Common myeloid progenitor, CD34-positive (primary cell): ENCODE measurements at regions of chr4 and their contacts with region 1.

Region 1: DNA sequence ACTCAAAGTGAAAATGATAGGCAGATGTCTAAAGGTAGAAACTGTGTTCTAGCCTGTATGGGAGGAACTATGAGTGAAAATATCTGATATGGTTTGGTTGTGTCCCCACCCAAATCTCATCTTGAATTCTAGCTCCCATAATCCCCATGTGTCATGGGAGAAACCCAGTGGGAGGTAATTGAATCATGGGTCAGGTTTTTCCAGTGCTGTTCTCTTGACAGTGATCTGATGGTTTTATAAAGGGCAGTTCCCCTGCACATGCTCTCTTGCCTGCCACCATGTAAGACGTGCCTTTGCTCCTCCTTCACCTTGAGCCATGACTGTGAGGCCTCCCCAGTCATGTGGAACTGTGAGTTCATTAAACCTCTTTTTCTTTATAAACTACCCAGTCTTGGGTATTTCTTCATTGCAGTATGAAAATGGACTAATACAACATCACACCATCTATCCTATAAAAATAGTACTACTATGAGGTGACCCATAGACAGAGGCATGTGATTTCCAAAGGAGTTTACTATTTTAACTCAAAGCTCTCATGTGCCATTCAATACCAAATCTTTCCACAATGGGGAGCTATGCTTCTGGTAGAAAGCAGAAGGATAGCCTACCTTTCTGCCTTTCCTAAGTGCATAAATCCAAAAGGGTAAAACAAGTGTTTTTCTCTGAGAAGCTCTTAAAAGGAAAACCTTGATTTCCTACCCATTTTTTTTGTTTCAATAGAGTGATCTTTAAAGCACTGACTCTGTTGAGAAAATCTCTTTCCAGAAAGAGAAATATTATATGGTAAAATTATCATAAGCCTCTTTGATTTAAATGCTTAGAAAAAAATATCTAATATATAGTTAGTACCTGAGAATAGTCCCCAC is 38.8 kb downstream of the SEC31A start:
- DNase-seq: peak; percentile 48 to 74 (median 68)
- H3K4me3 ChIP-seq: no peak overlapping the region
- H3K27ac ChIP-seq: no peak overlapping the region
- H3K4me1 ChIP-seq: no peaks in the 10 kb centered on the region
- H3K27me3 ChIP-seq: no peaks in the 10 kb centered on the region

Region 2: DNA sequence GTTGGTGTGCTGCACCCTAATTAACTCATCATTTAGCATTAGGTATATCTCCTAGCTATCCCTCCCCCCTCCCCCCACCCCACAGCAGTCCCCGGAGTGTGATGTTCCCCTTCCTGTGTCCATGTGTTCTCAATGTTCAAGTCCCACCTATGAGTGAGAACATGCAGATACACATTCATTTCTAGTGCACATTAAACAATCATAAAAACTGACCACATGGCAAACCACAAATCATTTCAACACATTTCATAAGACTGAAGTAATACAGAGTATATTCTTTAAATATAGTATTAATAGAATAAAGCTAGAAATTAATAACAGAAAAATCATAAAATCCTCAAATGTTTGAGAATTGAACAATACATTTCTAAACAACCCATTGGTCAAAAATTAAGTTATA is 1671.2 kb before region 1 on chr4:
- CTCF ChIA-PET with region 1: no interaction called
- POLR2A ChIA-PET with region 1: no interaction called
- DNase-seq: peak in 2 of 3 donors; percentile 52 to 68
- H3K4me3 ChIP-seq: no peak overlapping the region
- H3K27ac ChIP-seq: no peak overlapping the region
- H3K4me1 ChIP-seq: no peaks in the 10 kb centered on the region
- H3K27me3 ChIP-seq: no peaks in the 10 kb centered on the region

Region 3: GRCh38 chr4:82578935-82579334 is 273.2 kb before region 1 on chr4:
- CTCF ChIA-PET with region 1: no interaction called
- POLR2A ChIA-PET with region 1: no interaction called
- DNase-seq: peak in 1 of 3 donors; percentile 4
- H3K4me3 ChIP-seq: no peak overlapping the region
- H3K27ac ChIP-seq: no peak overlapping the region
- H3K4me1 ChIP-seq: no peaks in the 10 kb centered on the region
- H3K27me3 ChIP-seq: no peaks in the 10 kb centered on the region

Region 4: GRCh38 chr4:82825425-82825824 is 26.7 kb before region 1 on chr4:
- CTCF ChIA-PET with region 1: interaction called, 10 read pairs
- POLR2A ChIA-PET with region 1: no interaction called
- DNase-seq: no peak
- H3K4me3 ChIP-seq: no peak overlapping the region
- H3K27ac ChIP-seq: no peak overlapping the region
- H3K4me1 ChIP-seq: no peaks in the 10 kb centered on the region
- H3K27me3 ChIP-seq: no peaks in the 10 kb centered on the region

Region 5: GRCh38 chr4:82868572-82868971 is 16.5 kb after region 1 on chr4:
- CTCF ChIA-PET with region 1: interaction called, 11 read pairs
- POLR2A ChIA-PET with region 1: no interaction called
- DNase-seq: no peak
- H3K4me3 ChIP-seq: no peak overlapping the region
- H3K27ac ChIP-seq: no peak overlapping the region
- H3K4me1 ChIP-seq: peaks cover 0 to 7% (median 5%) of the 10 kb centered on the region in 4 experiments
- H3K27me3 ChIP-seq: no peaks in the 10 kb centered on the region

Region 6: DNA sequence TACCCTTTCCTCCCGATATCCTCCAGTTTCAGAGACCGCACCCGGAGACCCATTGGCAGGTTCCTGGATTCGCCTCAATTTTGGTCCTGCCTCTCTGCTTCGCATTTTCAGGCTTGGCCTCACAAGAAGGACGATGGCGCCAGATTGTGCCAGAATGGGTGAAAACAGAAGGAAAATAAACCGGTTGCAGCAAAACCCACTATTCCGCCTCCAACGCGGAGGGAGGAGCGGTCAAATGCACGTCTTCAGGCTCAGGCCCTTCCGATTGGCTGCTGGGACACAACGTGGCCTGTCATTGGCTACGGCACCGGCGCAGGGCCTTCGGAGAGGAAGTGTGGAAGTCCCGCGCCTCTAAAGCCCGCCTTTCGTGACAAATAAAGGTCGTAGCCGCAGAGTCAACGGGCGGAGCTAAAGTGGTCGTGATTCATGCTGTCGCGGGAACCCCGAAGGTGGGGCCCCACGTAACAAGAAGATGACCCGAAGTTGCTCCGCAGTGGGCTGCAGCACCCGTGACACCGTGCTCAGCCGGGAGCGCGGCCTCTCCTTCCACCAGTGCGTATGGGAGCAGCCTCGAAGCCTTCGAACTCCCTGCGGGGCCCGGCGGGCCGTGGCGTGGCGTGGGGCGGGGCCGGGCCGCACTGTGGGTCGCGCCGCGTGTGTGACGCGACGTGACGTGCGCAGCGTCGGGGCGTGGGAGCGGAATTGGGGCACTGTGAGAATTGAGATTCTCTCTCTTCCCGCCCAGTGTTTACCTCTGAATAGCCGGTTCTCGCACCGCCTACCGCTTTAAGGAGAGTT is 48.4 kb after region 1 on chr4 and contains the start of gene THAP9:
- CTCF ChIA-PET with region 1: interaction called, 50 read pairs
- POLR2A ChIA-PET with region 1: no interaction called
- DNase-seq: peak; percentile 100
- H3K4me3 ChIP-seq: peak within 1 kb of the TSS; percentile 71 to 98 (median 89)
- H3K27ac ChIP-seq: peak within 1 kb of the TSS; percentile 92 to 97
- H3K4me1 ChIP-seq: peaks cover 24 to 53% (median 43%) of the 10 kb centered on the region in 4 experiments
- H3K27me3 ChIP-seq: no peaks in the 10 kb centered on the region

Region 7: GRCh38 chr4:82918091-82918490 is 66.0 kb after region 1 on chr4:
- CTCF ChIA-PET with region 1: no interaction called
- POLR2A ChIA-PET with region 1: no interaction called
- DNase-seq: no peak
- H3K4me3 ChIP-seq: no peak overlapping the region
- H3K27ac ChIP-seq: no peak overlapping the region
- H3K4me1 ChIP-seq: no peaks in the 10 kb centered on the region
- H3K27me3 ChIP-seq: no peaks in the 10 kb centered on the region

Region 8: GRCh38 chr4:83046693-83047473 is 194.8 kb after region 1 on chr4:
- CTCF ChIA-PET with region 1: no interaction called
- POLR2A ChIA-PET with region 1: no interaction called
- DNase-seq: no peak
- H3K4me3 ChIP-seq: no peak overlapping the region
- H3K27ac ChIP-seq: no peak overlapping the region
- H3K4me1 ChIP-seq: no peaks in the 10 kb centered on the region
- H3K27me3 ChIP-seq: no peaks in the 10 kb centered on the region